Aorta (tissue), 5 donors: ENCODE measurements at regions of chr4 and their contacts with region 1.

Region 1: DNA sequence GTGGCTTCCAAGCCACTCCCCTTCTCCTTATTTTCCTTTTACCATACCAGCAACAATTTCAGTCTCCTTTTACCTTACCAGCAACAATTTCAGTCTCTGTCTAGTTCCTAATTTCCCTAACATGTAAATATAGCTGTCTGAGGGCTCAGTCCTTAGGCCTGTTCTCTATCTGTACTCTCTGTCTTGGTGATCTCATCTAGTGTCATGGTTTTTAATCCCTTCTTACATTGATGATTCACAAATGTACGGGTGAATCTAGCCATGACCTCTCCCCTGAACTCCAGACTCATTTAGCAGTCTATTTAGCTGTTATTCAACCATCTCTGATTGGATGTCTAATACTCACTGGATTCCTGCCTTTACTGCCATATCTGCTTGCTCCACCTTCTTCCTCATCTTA is 7.2 kb downstream of the IL15 start:
- DNase-seq: no peak
- ATAC-seq: no peak
- H3K4me3 ChIP-seq: no peak overlapping the region
- H3K27ac ChIP-seq: no peak overlapping the region
- H3K4me1 ChIP-seq: peaks cover 6 to 9% of the 10 kb centered on the region in 2 donors
- H3K27me3 ChIP-seq: no peaks in the 10 kb centered on the region

Region 2: GRCh38 chr4:141702472-141703182 is 59.1 kb after region 1 on chr4:
- intact Hi-C with region 1: no loop called
- DNase-seq: no peak
- ATAC-seq: no peak
- H3K4me3 ChIP-seq: no peak overlapping the region
- H3K27ac ChIP-seq: no peak overlapping the region
- H3K4me1 ChIP-seq: no peaks in the 10 kb centered on the region
- H3K27me3 ChIP-seq: no peaks in the 10 kb centered on the region

Region 3: DNA sequence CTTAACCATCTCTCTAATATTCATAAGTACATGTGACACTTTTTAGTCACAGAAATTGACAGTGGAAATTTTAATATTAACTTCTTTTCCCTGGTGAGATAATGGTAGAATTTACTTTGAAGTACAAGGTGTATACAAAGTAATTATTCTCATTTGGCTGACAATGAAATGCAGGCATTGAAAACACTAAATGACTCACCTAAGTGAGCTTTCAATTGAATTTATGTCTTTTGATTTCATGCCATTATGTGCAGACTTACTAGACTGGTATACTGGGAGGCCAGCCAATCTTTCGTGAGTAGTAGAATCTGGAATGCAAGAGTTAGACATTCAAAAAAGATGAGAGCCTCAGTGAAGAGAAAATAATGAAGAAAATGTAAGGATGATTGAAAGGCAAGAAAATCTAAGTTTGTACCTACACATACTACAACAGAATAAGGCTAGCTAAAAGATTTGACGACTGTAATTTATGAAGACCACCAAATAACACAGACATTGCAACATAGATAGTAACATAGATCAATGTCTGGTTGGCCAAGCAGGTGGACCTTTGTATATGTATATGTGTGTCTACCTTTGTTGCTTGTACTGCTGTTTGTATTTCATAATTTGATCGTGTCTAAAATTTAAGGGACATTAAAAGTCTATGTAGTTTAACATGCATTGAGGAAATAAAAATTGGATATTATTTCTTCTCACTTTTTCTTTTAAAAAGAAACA is 452.5 kb after region 1 on chr4:
- intact Hi-C with region 1: loop called in 1 of 2 experiments (anchors 10 kb)
- DNase-seq: peak in 1 of 2 donors; percentile 50
- ATAC-seq: no peak
- H3K4me3 ChIP-seq: no peak overlapping the region
- H3K27ac ChIP-seq: no peak overlapping the region
- H3K4me1 ChIP-seq: peaks cover 0 to 2% of the 10 kb centered on the region in 2 donors
- H3K27me3 ChIP-seq: no peaks in the 10 kb centered on the region